ENCODE measurements at regions of chr16 and their contacts with region 1.

Region 1: GRCh38 chr16:53509906-53510703 is 7.1 kb upstream of the AKTIP start:
- DNase-seq: peak; percentile 85
- H3K4me3 ChIP-seq: peak overlapping the region in 1 of 3 experiments; percentile 16
- H3K27ac ChIP-seq: peak overlapping the region; percentile 87
- H3K4me1 ChIP-seq: peaks cover 17% of the 10 kb centered on the region
- H3K27me3 ChIP-seq: no peaks in the 10 kb centered on the region
- CTCF ChIP-seq: peak; percentile 87 to 89
- POLR2A ChIP-seq: no peak

Region 2: GRCh38 chr16:53323924-53324323 is 186.2 kb before region 1 on chr16:
- CTCF ChIA-PET with region 1: no interaction called
- POLR2A ChIA-PET with region 1: interaction called, 3 read pairs
- dilution Hi-C with region 1: no loop called
- intact Hi-C with region 1: loop called (anchors 5 kb)
- DNase-seq: no peak
- H3K4me3 ChIP-seq: no peak overlapping the region
- H3K27ac ChIP-seq: no peak overlapping the region
- H3K4me1 ChIP-seq: no peaks in the 10 kb centered on the region
- H3K27me3 ChIP-seq: no peaks in the 10 kb centered on the region
- CTCF ChIP-seq: no peak
- POLR2A ChIP-seq: no peak

Region 3: DNA sequence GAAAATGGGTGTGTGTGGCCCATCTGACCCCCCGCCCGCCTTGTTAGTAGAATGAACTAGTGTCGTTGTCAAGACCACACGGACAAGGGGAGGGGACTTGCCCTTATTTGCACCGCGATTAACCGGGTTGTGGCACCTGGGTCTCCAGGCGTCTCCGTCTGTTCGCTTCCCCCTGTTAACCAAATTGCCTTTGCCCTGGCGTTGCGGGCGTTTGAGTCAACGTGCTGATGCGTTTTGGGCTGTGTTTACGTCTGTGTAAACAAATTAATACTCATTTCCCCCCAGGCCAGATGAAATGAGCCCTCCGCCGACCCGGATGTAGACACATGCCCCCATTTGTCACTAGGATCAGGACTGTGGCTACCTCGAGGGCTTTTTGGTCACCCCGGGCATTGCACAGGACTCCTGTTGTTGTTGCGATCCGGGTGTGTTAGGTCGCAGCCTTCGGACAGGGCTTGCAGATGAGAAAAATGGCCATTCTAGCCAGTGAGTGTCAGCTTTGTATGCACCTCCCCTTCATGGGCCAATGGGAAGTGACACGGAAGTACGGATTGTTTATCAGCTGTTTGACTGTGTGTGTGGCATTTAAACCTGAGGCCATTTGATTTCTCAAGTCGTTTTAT is 74.9 kb before region 1 on chr16:
- CTCF ChIA-PET with region 1: interaction called, 4 read pairs
- POLR2A ChIA-PET with region 1: no interaction called
- dilution Hi-C with region 1: no loop called
- intact Hi-C with region 1: loop called (anchors 1 kb)
- DNase-seq: peak; percentile 93
- H3K4me3 ChIP-seq: peak overlapping the region; percentile 81 to 90 (median 81)
- H3K27ac ChIP-seq: peak overlapping the region; percentile 78
- H3K4me1 ChIP-seq: peaks cover 5% of the 10 kb centered on the region
- H3K27me3 ChIP-seq: no peaks in the 10 kb centered on the region
- CTCF ChIP-seq: no peak
- POLR2A ChIP-seq: peak; percentile 37

Region 4: GRCh38 chr16:53933407-53933806 is 423.3 kb after region 1 on chr16:
- CTCF ChIA-PET with region 1: no interaction called
- POLR2A ChIA-PET with region 1: no interaction called
- dilution Hi-C with region 1: no loop called
- intact Hi-C with region 1: no loop called
- DNase-seq: no peak
- H3K4me3 ChIP-seq: no peak overlapping the region
- H3K27ac ChIP-seq: no peak overlapping the region
- H3K4me1 ChIP-seq: no peaks in the 10 kb centered on the region
- H3K27me3 ChIP-seq: no peaks in the 10 kb centered on the region
- CTCF ChIP-seq: no peak
- POLR2A ChIP-seq: no peak

Measured in endothelial cell of umbilical vein (primary cell).